ENCODE measurements at regions of chr11 and their contacts with region 1.

Region 1: DNA sequence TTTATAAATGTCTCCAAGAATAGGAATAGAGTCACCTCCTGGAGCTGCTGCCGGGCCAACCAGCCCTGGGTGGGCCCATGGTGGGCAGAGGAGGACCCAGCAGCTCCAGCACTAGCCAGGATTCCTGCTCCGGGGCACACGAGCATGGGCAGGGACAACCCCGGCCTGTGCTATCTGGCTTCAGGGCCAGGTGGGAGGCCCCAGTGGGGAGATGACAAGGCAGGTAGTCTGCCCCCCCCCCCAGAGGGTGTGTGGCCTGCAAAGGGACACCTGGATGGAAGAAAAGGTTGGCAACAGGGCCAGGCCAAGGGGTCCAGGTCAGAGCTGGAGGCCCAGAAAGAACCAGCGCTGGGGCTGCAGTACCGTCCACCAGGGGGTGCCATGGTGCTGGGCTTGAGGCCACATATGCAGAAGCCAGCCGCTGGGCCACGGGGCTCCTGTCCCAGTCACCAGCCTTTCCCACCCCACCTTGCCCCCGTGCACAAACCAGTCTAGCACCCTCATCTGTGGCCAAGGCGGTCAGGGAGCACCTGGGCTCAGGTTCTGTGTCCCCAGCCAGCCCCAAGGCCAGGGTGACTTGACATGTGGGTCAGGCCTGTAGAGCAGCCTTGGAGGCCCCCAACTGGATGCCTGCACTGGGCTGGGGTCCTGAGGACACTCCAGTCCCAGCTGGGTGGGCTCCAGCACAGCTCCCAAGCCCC is 3.5 kb downstream of the TSPAN32 start:
- DNase-seq: peak; percentile 85
- ATAC-seq: peak; percentile 56
- H3K4me3 ChIP-seq: no peak overlapping the region
- H3K4me3 Mint-ChIP-seq: peak overlapping the region; percentile 59
- H3K27ac ChIP-seq: peak overlapping the region in 1 of 2 donors; percentile 40
- H3K27ac Mint-ChIP-seq: peak overlapping the region; percentile 67
- H3K4me1 ChIP-seq: peaks cover 59 to 62% of the 10 kb centered on the region in 2 donors
- H3K4me1 Mint-ChIP-seq: peaks cover 51% of the 10 kb centered on the region
- H3K27me3 ChIP-seq: no peaks in the 10 kb centered on the region
- H3K27me3 Mint-ChIP-seq: no peaks in the 10 kb centered on the region
- CTCF ChIP-seq: peak; percentile 93

Region 2: GRCh38 chr11:2092956-2093412 is 212.3 kb before region 1 on chr11:
- CTCF ChIA-PET with region 1: no interaction called
- POLR2A ChIA-PET with region 1: no interaction called
- intact Hi-C with region 1: no loop called
- DNase-seq: no peak
- ATAC-seq: no peak
- H3K4me3 ChIP-seq: no peak overlapping the region
- H3K4me3 Mint-ChIP-seq: no peak overlapping the region
- H3K27ac ChIP-seq: no peak overlapping the region
- H3K27ac Mint-ChIP-seq: no peak overlapping the region
- H3K4me1 ChIP-seq: peaks cover 0 to 2% of the 10 kb centered on the region in 2 donors
- H3K4me1 Mint-ChIP-seq: no peaks in the 10 kb centered on the region
- H3K27me3 ChIP-seq: peaks cover 0 to 7% (median 1%) of the 10 kb centered on the region in 4 experiments
- H3K27me3 Mint-ChIP-seq: peaks cover 12% of the 10 kb centered on the region
- CTCF ChIP-seq: no peak

Region 3: GRCh38 chr11:2122222-2123085 is 182.8 kb before region 1 on chr11:
- CTCF ChIA-PET with region 1: no interaction called
- POLR2A ChIA-PET with region 1: no interaction called
- intact Hi-C with region 1: no loop called
- DNase-seq: no peak
- ATAC-seq: no peak
- H3K4me3 ChIP-seq: no peak overlapping the region
- H3K4me3 Mint-ChIP-seq: no peak overlapping the region
- H3K27ac ChIP-seq: no peak overlapping the region
- H3K27ac Mint-ChIP-seq: no peak overlapping the region
- H3K4me1 ChIP-seq: no peaks in the 10 kb centered on the region
- H3K4me1 Mint-ChIP-seq: no peaks in the 10 kb centered on the region
- H3K27me3 ChIP-seq: peaks cover 0 to 21% (median 5%) of the 10 kb centered on the region in 4 experiments
- H3K27me3 Mint-ChIP-seq: peaks cover 20% of the 10 kb centered on the region
- CTCF ChIP-seq: no peak

Region 4: DNA sequence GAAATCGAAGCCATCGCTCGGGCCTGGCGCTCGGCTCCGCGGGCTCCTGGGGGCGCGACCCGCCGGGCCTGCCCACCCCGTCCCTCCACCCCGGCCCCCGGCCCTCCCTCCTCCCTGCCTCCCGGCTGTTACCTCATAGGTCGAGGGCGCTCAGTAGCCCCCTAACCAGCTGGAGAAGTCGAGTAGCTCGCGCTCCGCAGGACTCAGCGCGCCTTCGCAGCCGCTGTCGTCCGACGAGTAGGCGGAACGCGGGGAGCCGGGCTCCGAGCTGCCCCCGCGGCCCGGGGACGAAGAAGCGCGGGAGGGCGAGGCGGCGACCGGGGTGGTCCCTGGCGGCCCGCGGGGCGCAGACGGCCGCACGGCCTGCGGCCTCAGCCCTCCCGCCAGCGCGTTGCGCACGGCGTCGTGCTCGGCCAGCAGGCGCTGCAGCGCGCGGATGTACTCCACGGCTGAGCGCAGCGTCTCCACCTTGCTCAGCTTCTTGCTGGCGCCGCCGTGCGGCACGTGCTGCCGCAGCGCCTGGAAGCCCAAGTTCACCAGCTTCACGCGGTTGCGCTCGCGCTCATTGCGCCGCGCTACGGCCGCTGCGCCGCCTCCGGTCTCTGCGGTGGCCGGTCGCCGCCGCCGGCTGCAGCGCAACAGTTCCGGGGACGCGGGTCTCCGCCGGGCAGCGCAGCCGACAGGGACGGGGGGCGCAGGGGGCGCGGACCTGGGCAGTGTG is 35.5 kb before region 1 on chr11:
- CTCF ChIA-PET with region 1: interaction called, 12 read pairs
- POLR2A ChIA-PET with region 1: interaction called, 3 read pairs
- intact Hi-C with region 1: no loop called
- DNase-seq: peak; percentile 80
- ATAC-seq: peak; percentile 34
- H3K4me3 ChIP-seq: peak overlapping the region; percentile 31 to 75 (median 52)
- H3K4me3 Mint-ChIP-seq: peak overlapping the region; percentile 84
- H3K27ac ChIP-seq: no peak overlapping the region
- H3K27ac Mint-ChIP-seq: peak overlapping the region; percentile 84
- H3K4me1 ChIP-seq: peaks cover 38 to 48% of the 10 kb centered on the region in 2 donors
- H3K4me1 Mint-ChIP-seq: peaks cover 41% of the 10 kb centered on the region
- H3K27me3 ChIP-seq: peaks cover 0 to 31% (median 9%) of the 10 kb centered on the region in 4 experiments
- H3K27me3 Mint-ChIP-seq: peaks cover 2% of the 10 kb centered on the region
- CTCF ChIP-seq: peak; percentile 36

Region 5: DNA sequence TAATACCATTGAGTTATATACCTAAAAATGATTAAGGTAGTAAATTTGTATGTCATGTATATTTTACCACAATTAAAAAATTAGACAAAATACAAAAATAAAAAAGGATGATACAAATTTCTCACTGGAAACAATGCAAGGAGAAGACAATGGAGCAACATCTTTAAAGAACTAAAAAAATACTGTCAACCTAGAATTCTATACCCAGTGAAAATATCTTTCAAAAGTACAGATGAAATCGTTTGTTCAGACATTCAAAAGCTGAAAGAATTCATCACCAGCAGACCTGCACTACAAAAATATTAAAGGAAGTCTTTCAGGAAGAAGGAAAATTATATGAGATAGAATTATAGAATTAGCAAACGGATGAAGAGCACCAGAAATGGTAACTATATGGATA is 25.1 kb before region 1 on chr11:
- CTCF ChIA-PET with region 1: no interaction called
- POLR2A ChIA-PET with region 1: no interaction called
- intact Hi-C with region 1: no loop called
- DNase-seq: no peak
- ATAC-seq: no peak
- H3K4me3 ChIP-seq: no peak overlapping the region
- H3K4me3 Mint-ChIP-seq: no peak overlapping the region
- H3K27ac ChIP-seq: no peak overlapping the region
- H3K27ac Mint-ChIP-seq: no peak overlapping the region
- H3K4me1 ChIP-seq: no peaks in the 10 kb centered on the region
- H3K4me1 Mint-ChIP-seq: no peaks in the 10 kb centered on the region
- H3K27me3 ChIP-seq: peaks cover 0 to 16% (median 3%) of the 10 kb centered on the region in 4 experiments
- H3K27me3 Mint-ChIP-seq: peaks cover 9% of the 10 kb centered on the region
- CTCF ChIP-seq: no peak

Region 6: DNA sequence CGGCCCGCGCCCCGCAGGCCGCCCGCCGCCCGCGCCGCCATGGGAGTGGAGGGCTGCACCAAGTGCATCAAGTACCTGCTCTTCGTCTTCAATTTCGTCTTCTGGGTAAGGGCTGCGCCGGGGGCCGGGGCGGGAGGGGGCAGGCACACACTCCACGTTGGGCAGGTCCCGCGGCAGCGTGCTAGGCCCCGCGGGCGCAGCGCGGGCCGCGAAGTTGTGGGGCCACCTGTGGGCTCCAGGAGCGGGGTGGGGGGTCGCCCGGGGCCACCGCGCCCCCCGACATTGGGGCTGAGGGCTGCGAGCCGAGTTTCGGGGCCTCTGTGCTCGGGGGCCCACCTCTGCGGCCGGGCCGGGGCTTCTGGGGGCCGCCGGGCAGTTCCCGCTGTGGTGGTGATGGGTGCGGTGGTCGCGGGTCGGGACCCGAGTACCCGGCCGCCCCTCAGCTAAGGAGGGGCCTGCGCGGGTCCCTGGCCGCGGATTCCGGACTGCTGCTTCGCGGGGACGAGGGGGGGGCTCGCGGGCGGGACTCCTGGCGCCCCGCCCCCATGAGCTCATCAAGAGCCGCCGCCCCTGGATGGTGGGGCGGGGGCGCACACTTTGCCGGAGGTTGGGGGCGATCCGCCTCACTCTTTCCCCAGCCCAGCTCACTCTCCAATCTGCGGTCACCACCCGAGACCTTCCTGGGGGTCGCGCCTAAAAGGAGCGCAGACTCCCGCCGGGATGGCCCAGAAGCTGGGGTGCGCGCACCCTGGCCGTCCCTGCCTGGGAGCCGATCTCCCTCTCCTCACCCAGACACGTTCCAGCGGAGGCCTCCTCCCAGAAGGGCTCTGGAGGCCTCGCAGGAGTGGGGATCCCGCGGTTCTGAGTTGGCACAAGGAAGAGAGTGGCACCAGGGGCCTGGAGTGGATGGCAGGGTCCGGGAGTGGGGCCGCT is 72.5 kb after region 1 on chr11:
- CTCF ChIA-PET with region 1: interaction called, 59 read pairs
- POLR2A ChIA-PET with region 1: interaction called, 11 read pairs
- intact Hi-C with region 1: loop called (anchors 2 kb)
- DNase-seq: peak; percentile 73
- ATAC-seq: peak; percentile 42
- H3K4me3 ChIP-seq: peak overlapping the region; percentile 9 to 92 (median 79)
- H3K4me3 Mint-ChIP-seq: peak overlapping the region; percentile 89
- H3K27ac ChIP-seq: peak overlapping the region; percentile 50 to 86
- H3K27ac Mint-ChIP-seq: peak overlapping the region; percentile 82
- H3K4me1 ChIP-seq: peaks cover 50 to 55% of the 10 kb centered on the region in 2 donors
- H3K4me1 Mint-ChIP-seq: peaks cover 48% of the 10 kb centered on the region
- H3K27me3 ChIP-seq: no peaks in the 10 kb centered on the region
- H3K27me3 Mint-ChIP-seq: no peaks in the 10 kb centered on the region
- CTCF ChIP-seq: no peak

Region 7: DNA sequence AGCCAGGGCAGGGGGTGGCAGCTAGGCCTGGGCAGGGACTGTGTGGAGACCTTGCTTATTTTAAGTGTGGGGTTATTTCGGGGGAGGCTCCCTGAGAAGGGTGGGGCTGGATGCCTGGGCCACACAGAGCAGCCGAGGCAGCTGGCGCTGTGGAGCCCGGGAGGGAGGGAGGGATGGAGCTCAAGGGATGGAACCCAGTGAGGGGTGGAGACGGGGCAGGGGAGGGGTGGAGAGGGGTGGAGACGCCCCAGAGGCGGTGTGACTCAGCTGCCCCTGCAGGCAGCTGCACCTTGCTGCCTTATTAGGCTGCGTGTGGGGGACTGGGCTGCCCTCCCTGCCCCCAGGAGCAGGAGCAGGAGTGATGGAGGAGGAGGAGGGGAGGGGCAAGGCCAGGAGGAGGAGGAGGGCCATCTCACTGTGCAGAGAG is 85.4 kb after region 1 on chr11:
- CTCF ChIA-PET with region 1: interaction called, 59 read pairs
- POLR2A ChIA-PET with region 1: interaction called, 6 read pairs
- intact Hi-C with region 1: no loop called
- DNase-seq: no peak
- ATAC-seq: no peak
- H3K4me3 ChIP-seq: no peak overlapping the region
- H3K4me3 Mint-ChIP-seq: peak overlapping the region; percentile 55
- H3K27ac ChIP-seq: no peak overlapping the region
- H3K27ac Mint-ChIP-seq: peak overlapping the region; percentile 66
- H3K4me1 ChIP-seq: peaks cover 100% of the 10 kb centered on the region in 2 donors
- H3K4me1 Mint-ChIP-seq: peaks cover 83% of the 10 kb centered on the region
- H3K27me3 ChIP-seq: no peaks in the 10 kb centered on the region
- H3K27me3 Mint-ChIP-seq: no peaks in the 10 kb centered on the region
- CTCF ChIP-seq: no peak

Region 8: DNA sequence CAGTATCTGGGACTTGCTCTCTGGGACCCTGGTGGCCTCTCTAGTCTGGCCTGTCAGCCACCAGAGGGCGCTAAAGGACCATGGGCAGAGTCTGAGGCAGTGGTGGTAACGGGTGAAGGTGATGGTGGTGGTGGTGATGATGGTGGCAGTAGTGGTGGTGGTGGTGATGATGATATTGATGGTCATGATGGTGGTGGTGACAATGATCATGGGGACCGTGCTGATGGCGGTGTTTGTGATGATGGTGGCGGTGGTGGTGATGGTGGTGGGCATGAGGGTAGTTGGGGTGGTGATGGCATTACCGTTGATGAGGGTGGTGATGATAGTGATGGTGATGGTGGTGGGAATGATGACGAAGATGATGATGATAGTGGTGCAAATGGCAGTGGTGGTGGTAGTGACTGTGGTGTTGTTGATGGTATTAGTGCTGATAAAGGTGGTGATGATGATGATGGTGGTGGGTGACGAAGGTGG is 123.1 kb after region 1 on chr11:
- CTCF ChIA-PET with region 1: interaction called, 583 read pairs
- POLR2A ChIA-PET with region 1: no interaction called
- intact Hi-C with region 1: no loop called
- DNase-seq: peak; percentile 85
- ATAC-seq: peak; percentile 94
- H3K4me3 ChIP-seq: no peak overlapping the region
- H3K4me3 Mint-ChIP-seq: no peak overlapping the region
- H3K27ac ChIP-seq: no peak overlapping the region
- H3K27ac Mint-ChIP-seq: no peak overlapping the region
- H3K4me1 ChIP-seq: no peaks in the 10 kb centered on the region
- H3K4me1 Mint-ChIP-seq: no peaks in the 10 kb centered on the region
- H3K27me3 ChIP-seq: no peaks in the 10 kb centered on the region
- H3K27me3 Mint-ChIP-seq: no peaks in the 10 kb centered on the region
- CTCF ChIP-seq: peak; percentile 82